ENCODE measurements at regions of chr9 and their contacts with region 1.

Region 1: DNA sequence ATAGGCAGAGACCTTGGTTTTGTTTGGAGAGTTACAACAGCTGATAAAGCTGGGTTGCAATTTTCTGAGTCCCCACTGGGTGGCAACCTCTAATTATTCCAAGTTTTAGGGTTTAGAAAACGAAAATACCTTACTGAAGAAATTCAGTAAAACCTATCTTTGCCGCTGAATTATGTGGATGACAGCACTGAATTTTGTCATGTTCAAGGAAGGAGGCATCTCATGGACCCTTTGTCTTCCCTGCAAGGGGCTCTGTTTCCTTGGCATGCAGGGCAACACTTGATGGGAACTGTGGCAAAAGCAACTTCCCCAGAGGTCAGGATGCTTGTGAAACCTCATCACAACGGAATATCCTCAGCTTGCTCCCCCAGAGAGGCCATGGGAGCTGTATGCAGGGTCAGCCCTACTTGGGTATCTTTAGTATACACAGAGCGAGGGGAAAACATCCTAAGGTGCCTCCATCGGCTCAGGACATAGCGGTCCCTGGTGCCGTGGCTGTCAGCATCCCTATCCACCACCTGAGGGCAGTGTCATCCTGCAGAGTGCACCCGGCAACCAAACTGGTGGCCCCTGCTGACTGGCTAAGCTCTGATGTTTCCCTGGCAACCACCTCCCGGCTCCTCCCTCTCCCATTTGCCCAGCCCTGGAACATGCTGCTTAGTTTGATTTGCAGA is 123.1 kb downstream of the RXRA start:
- DNase-seq: peak; percentile 94 to 97 (median 95)
- H3K4me3 ChIP-seq: no peak overlapping the region
- H3K27ac ChIP-seq: no peak overlapping the region
- H3K4me1 ChIP-seq: no peaks in the 10 kb centered on the region
- H3K27me3 ChIP-seq: no peaks in the 10 kb centered on the region
- CTCF ChIP-seq: peak; percentile 93

Region 2: DNA sequence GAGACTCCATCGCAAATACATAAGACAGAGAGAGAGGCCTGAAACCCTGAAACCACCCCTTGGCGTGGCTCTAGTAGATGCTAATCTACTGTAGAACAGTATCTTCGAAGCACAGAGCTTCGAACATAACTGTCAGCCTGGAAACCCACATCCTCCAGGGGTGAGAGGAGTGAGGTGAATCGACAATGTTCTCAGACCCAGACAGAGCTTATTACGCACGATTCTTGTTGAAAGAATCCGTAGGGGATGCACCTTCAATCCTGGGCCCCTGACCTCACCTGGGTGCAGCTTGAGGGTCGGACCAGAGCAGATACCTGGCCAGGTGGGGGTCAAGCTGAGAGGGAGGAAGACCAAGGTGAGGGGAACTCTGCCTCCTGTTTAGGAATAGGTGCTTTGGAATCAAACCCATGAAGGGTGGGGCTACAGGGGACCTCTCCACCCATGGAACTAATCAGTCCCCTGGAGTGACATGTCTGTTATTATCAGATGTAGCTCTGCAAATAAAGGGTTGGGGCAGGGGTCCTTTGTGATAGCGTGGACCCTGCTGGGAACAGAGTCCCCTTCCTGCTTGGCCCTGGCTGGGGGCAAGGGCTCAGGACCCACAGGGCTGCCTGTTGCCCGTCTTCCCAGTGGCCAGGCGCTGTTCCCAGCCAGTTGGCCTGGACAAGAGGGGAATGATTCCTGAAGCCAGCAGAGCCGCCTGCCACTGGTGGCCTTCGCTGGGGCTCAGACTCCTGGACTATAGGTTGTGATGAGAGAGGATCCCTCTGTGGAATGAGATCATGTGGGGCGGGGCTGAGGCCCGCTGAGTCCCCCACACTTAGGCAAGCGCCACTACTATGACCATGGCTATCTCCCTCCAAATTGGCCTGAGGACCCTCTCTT is 772.0 kb before region 1 on chr9:
- intact Hi-C with region 1: no loop called
- DNase-seq: peak in 1 of 5 donors; percentile 51
- H3K4me3 ChIP-seq: no peak overlapping the region
- H3K27ac ChIP-seq: no peak overlapping the region
- H3K4me1 ChIP-seq: peaks cover 0 to 5% (median 3%) of the 10 kb centered on the region in 3 donors
- H3K27me3 ChIP-seq: no peaks in the 10 kb centered on the region
- CTCF ChIP-seq: no peak

Region 3: GRCh38 chr9:134738869-134739659 is 289.7 kb after region 1 on chr9:
- intact Hi-C with region 1: loop called (anchors 5 kb)
- DNase-seq: peak in 4 of 5 donors; percentile 75 to 87 (median 84)
- H3K4me3 ChIP-seq: no peak overlapping the region
- H3K27ac ChIP-seq: no peak overlapping the region
- H3K4me1 ChIP-seq: no peaks in the 10 kb centered on the region
- H3K27me3 ChIP-seq: no peaks in the 10 kb centered on the region
- CTCF ChIP-seq: peak; percentile 92